Activated CD4-positive, alpha-beta memory T cell treated with anti-CD3 and anti-CD28 coated beads for 36 hours (primary cell): ENCODE measurements at regions of chr15 and their contacts with region 1.

Region 1: DNA sequence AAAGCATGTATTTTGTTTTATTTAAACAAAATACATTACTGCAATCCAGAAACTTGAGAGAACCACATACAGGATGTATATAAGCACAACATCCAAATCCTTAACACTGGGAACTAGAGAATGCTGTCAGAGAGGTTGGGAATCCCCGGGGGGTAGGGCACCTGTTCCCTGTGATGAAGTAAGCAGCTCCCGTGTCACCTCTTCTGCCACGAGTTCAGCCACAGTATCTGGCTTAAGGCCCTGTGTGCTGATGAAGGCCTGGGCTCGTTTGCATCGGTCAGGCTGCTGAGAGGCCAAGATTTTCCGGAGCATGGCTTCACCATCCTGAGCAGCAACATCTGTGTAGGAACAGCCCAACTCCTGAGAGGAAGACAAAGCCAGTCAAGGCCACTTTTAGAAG is 36.4 kb downstream of the EIF3J start:
- DNase-seq: no peak
- H3K4me3 Mint-ChIP-seq: no peak overlapping the region
- H3K27ac Mint-ChIP-seq: no peak overlapping the region
- H3K4me1 Mint-ChIP-seq: peaks cover 2% of the 10 kb centered on the region
- H3K27me3 Mint-ChIP-seq: no peaks in the 10 kb centered on the region

Region 2: GRCh38 chr15:44584162-44584749 is 10.9 kb after region 1 on chr15:
- CTCF ChIA-PET with region 1: interaction called, 14 read pairs
- POLR2A ChIA-PET with region 1: no interaction called
- intact Hi-C with region 1: no loop called
- DNase-seq: peak; percentile 76
- H3K4me3 Mint-ChIP-seq: no peak overlapping the region
- H3K27ac Mint-ChIP-seq: no peak overlapping the region
- H3K4me1 Mint-ChIP-seq: no peaks in the 10 kb centered on the region
- H3K27me3 Mint-ChIP-seq: no peaks in the 10 kb centered on the region

Region 3: GRCh38 chr15:44788748-44789147 is 215.4 kb after region 1 on chr15:
- CTCF ChIA-PET with region 1: interaction called, 10 read pairs
- POLR2A ChIA-PET with region 1: no interaction called
- intact Hi-C with region 1: loop called (anchors 1 kb)
- DNase-seq: peak; percentile 72
- H3K4me3 Mint-ChIP-seq: peak overlapping the region; percentile 37
- H3K27ac Mint-ChIP-seq: peak overlapping the region; percentile 79
- H3K4me1 Mint-ChIP-seq: peaks cover 32% of the 10 kb centered on the region
- H3K27me3 Mint-ChIP-seq: no peaks in the 10 kb centered on the region

Region 4: DNA sequence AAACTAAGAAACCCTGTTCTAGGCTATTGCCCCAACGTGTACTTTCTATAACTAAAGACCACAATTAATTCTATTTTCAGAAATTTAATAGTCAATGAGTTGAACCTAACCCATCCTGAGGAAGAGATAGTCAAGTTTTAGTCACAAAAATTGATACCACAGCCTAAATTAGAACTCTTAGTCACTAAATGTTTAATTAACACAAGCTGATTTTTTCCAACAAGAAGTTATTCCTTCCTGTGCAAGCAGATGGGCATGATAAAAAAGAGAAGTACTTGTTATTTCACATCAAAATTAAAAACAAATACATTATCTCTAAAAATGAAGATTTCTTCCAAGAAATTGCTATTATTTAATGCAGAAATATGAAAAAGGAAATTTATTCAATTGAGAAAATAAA is 344.8 kb after region 1 on chr15:
- CTCF ChIA-PET with region 1: no interaction called
- POLR2A ChIA-PET with region 1: no interaction called
- intact Hi-C with region 1: loop called (anchors 5 kb)
- DNase-seq: no peak
- H3K4me3 Mint-ChIP-seq: no peak overlapping the region
- H3K27ac Mint-ChIP-seq: no peak overlapping the region
- H3K4me1 Mint-ChIP-seq: no peaks in the 10 kb centered on the region
- H3K27me3 Mint-ChIP-seq: no peaks in the 10 kb centered on the region